GM10248 (cell line): ENCODE measurements at regions of chr5 and their contacts with region 1.

Region 1: GRCh38 chr5:139517683-139518564 is 35.4 kb upstream of the STING1 start:
- DNase-seq: peak; percentile 95
- CTCF ChIP-seq: peak; percentile 97

Region 2: DNA sequence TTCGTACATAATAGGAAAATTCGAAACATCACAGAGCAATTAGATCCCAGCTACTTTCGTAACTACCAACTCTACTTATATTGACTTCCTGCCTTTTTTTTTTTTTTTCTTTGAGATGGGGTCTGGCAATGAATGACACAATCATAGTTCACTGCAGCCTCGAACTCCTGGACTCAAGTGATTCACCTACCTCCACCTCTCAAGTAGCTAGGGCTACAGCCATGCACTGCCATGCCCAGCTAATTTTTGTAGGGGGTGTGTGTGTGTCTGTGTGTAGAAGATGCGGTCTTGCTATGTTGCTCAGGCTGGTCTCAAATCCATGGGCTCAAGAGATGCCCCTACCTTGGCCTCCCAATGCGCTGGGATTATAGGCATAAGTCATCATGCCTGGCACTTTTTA is 182.1 kb before region 1 on chr5:
- CTCF ChIA-PET with region 1: no interaction called
- POLR2A ChIA-PET with region 1: no interaction called
- DNase-seq: no peak
- CTCF ChIP-seq: no peak

Region 3: GRCh38 chr5:139430015-139430414 is 87.9 kb before region 1 on chr5:
- CTCF ChIA-PET with region 1: interaction called, 504 read pairs
- POLR2A ChIA-PET with region 1: no interaction called
- DNase-seq: no peak
- CTCF ChIP-seq: no peak

Region 4: GRCh38 chr5:139458580-139459406 is 59.1 kb before region 1 on chr5:
- CTCF ChIA-PET with region 1: interaction called, 11 read pairs
- POLR2A ChIA-PET with region 1: no interaction called
- DNase-seq: peak; percentile 70
- CTCF ChIP-seq: no peak

Region 5: DNA sequence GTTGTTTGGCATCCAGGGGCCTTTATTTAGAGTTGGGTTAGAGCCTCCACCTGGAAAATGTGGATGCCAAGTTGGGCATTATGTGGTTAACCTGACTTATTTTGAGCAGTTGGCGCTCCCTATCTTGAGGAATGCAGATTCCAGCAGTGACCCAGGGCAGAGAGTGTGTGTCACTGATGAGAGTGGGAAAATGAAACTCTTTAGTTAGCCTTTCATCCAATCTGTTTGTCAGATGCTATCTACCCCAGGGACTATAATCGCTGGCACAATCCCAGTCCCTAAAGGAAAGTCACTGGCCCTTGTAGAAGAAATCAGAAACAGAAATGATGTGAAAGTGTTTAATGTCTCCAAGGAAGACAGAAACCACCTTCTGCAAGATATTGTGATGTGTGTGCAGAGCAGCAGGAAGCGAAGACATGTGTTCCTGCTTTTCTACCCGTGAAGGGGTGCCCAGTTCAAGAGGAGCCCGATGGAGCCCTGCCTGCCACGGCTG is 25.2 kb before region 1 on chr5:
- CTCF ChIA-PET with region 1: interaction called, 18 read pairs
- POLR2A ChIA-PET with region 1: no interaction called
- DNase-seq: no peak
- CTCF ChIP-seq: no peak